ENCODE measurements at regions of chr3 and their contacts with region 1.

Region 1: DNA sequence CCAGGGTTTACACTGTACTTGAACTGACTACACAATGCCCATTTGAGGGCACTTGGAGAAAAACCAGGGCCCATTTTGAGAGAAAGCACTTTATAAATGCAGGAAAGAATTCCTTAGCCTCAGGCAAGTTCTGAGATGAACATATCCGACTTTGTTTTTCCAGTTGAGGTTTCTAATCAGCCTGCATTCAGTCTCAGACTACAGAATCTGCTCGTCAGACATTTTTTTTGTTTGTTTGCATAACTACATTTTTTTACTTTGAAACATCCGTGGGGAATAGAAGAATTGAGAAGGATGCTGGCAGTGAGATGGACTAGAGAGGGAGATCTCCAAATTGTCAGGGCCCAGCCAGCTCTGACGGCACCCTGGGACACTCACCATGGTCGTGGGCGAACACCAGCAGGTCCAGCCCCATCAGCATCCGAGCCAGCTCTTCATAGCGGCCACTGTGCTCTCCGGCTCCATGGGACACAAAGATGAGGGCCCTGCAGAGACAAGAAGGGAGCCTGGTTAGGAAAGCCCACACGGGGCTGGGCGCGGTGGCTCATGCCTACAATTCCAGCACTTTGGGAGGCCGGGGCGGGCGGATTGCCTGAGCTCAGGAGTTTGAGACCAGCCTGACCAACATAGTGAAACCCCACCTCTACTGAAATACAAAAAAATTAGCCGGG is 40.8 kb downstream of the MGLL start:
- DNase-seq: no peak
- H3K4me3 ChIP-seq: no peak overlapping the region
- H3K27ac ChIP-seq: no peak overlapping the region
- H3K4me1 ChIP-seq: no peaks in the 10 kb centered on the region; a peak in 1 of 7 replicates
- H3K27me3 ChIP-seq: no peaks in the 10 kb centered on the region
- CTCF ChIP-seq: no peak
- EP300 ChIP-seq: no peak
- POLR2A ChIP-seq: no peak
- RAD21 ChIP-seq: no peak

Region 2: DNA sequence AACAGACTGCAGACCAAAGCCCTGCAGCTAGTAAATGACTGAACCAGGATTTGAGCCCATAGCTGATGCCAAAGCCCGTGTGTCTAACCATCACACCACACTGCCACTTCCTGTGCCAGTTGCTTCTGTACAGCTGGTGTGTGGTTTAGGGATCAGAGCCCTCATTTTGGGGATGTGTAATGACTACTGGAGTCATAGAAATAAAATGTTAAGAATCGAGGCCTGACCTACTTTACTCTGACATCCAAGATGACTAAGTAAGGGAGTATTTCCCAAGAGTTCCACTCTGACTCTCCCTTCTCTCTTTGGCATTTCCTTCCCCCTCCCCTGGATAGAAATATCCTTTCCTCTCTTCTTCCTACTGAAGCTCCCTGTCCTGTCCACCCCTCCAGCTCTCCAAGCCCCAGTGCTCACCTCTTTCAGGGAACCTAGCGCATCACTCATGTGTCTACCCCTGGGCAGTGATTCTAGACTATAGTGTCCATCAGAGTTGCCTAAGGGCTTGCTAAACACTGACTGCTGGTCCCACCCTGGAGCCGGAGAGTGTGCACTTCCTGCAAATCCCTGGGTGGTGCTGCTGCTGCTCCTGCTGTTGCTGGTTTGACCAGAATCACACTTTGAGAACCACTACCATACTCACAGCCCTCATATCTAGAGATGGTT is 13.1 kb before region 1 on chr3:
- CTCF ChIA-PET with region 1: interaction called, 11 read pairs
- POLR2A ChIA-PET with region 1: no interaction called
- DNase-seq: no peak
- H3K4me3 ChIP-seq: no peak overlapping the region
- H3K27ac ChIP-seq: no peak overlapping the region
- H3K4me1 ChIP-seq: no peaks in the 10 kb centered on the region
- H3K27me3 ChIP-seq: no peaks in the 10 kb centered on the region
- CTCF ChIP-seq: no peak
- EP300 ChIP-seq: no peak
- POLR2A ChIP-seq: no peak
- RAD21 ChIP-seq: no peak

Region 3: GRCh38 chr3:127799476-127800222 is 18.1 kb after region 1 on chr3:
- CTCF ChIA-PET with region 1: no interaction called
- POLR2A ChIA-PET with region 1: no interaction called
- DNase-seq: no peak
- H3K4me3 ChIP-seq: no peak overlapping the region
- H3K27ac ChIP-seq: no peak overlapping the region
- H3K4me1 ChIP-seq: no peaks in the 10 kb centered on the region
- H3K27me3 ChIP-seq: no peaks in the 10 kb centered on the region
- CTCF ChIP-seq: no peak
- EP300 ChIP-seq: no peak
- POLR2A ChIP-seq: no peak
- RAD21 ChIP-seq: no peak